Activated CD4-positive, alpha-beta T cell treated with anti-CD3 and anti-CD28 coated beads for 36 hours (primary cell): ENCODE measurements at regions of chr20 and their contacts with region 1.

Region 1: GRCh38 chr20:29497261-29497671 is 1760.2 kb upstream of the DEFB115 start:
- DNase-seq: peak; percentile 26
- ATAC-seq: no peak
- H3K4me3 Mint-ChIP-seq: peak overlapping the region; percentile 66
- H3K27ac Mint-ChIP-seq: no peak overlapping the region
- H3K4me1 Mint-ChIP-seq: no peaks in the 10 kb centered on the region
- H3K27me3 Mint-ChIP-seq: no peaks in the 10 kb centered on the region

Region 2: DNA sequence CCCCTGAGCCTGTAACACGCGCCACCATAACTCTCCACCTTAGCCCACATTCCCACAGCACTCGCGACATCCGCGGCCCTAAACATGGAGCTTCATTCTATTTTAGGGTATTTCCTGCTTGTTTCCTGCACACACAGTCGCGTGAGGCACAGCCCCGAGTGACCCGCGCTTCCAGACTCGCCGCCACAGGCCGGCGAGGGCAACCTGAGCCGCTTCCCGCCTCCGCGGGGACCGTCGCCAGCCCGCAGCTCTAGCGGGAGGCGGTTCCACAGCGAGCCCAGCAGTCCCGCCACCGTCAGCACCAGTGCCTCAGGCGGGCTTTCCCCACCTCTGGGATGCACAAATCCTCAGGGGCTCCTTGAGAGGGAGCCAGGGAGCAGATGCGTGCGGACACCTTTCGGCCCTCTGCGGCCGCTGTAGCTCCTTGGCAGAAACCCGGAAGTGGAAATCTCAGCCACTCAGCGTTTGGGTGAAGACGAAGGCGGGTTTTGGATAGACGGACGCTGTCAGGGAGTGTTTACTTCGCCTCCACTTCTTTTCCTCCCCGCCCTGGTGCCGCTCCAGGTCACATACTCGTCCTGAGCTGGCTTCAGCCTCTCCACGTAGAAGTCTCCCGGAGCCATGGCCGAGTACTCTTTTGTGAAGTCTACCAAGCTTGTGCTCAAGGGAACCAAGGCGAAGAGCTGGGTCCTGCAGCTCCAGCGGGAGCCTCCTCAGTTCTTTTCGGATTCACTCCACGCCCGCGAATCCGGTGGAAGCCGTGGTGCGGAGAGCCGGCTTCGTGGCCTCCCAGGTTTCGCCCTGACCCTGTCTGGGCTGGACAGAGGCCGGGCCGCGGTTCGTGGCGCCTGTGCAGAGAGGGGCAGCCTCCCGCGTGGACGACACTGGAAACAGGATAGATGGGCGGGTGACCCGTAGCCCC is 417.2 kb before region 1 on chr20:
- CTCF ChIA-PET with region 1: no interaction called
- POLR2A ChIA-PET with region 1: no interaction called
- intact Hi-C with region 1: loop called in 1 of 2 experiments (anchors 5 kb)
- DNase-seq: peak; percentile 35
- ATAC-seq: peak; percentile 51
- H3K4me3 Mint-ChIP-seq: peak overlapping the region; percentile 55
- H3K27ac Mint-ChIP-seq: no peak overlapping the region
- H3K4me1 Mint-ChIP-seq: peaks cover 2% of the 10 kb centered on the region
- H3K27me3 Mint-ChIP-seq: no peaks in the 10 kb centered on the region